MCF 10A (cell line): ENCODE measurements at regions of chr6 and their contacts with region 1.

Region 1: GRCh38 chr6:163533443-163533842 is 118.9 kb downstream of the QKI start:
- DNase-seq: peak; percentile 85
- H3K4me3 Mint-ChIP-seq: no peak overlapping the region
- H3K27ac Mint-ChIP-seq: peak overlapping the region; percentile 19
- H3K4me1 Mint-ChIP-seq: peaks cover 34% of the 10 kb centered on the region
- H3K27me3 Mint-ChIP-seq: no peaks in the 10 kb centered on the region
- CTCF ChIP-seq: no peak

Region 2: DNA sequence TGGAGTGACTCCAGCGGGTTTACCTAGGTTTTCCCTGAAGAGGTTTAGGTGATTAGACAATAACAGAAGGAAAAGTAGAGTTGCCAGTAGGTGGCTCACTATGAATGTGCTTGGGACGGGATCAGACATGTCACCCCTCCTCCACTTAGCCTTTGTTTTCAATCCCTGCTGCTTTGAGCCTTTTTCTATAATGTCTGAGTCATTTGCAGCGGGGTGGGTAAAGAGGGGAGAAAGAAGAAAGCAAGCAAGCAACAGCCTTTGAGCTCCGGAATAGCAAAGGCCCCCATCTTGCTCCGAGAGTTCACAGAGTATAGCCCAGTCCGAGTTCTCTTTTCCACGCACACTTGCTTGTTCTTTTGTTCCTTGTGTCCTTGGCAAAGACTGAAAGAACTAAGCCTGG is 676.6 kb before region 1 on chr6:
- CTCF ChIA-PET with region 1: no interaction called
- POLR2A ChIA-PET with region 1: no interaction called
- intact Hi-C with region 1: loop called (anchors 10 kb)
- DNase-seq: peak; percentile 86
- H3K4me3 Mint-ChIP-seq: peak overlapping the region; percentile 66
- H3K27ac Mint-ChIP-seq: peak overlapping the region; percentile 81
- H3K4me1 Mint-ChIP-seq: peaks cover 9% of the 10 kb centered on the region
- H3K27me3 Mint-ChIP-seq: no peaks in the 10 kb centered on the region
- CTCF ChIP-seq: peak; percentile 59

Region 3: GRCh38 chr6:163457637-163458561 is 75.5 kb before region 1 on chr6:
- CTCF ChIA-PET with region 1: no interaction called
- POLR2A ChIA-PET with region 1: interaction called, 3 read pairs
- intact Hi-C with region 1: loop called (anchors 5 kb)
- DNase-seq: peak; percentile 77
- H3K4me3 Mint-ChIP-seq: peak overlapping the region; percentile 8
- H3K27ac Mint-ChIP-seq: peak overlapping the region; percentile 73
- H3K4me1 Mint-ChIP-seq: peaks cover 58% of the 10 kb centered on the region
- H3K27me3 Mint-ChIP-seq: no peaks in the 10 kb centered on the region
- CTCF ChIP-seq: no peak

Region 4: GRCh38 chr6:163516908-163517307 is 16.5 kb before region 1 on chr6:
- CTCF ChIA-PET with region 1: interaction called, 3 read pairs
- POLR2A ChIA-PET with region 1: interaction called, 10 read pairs
- intact Hi-C with region 1: no loop called
- DNase-seq: no peak
- H3K4me3 Mint-ChIP-seq: no peak overlapping the region
- H3K27ac Mint-ChIP-seq: no peak overlapping the region
- H3K4me1 Mint-ChIP-seq: peaks cover 16% of the 10 kb centered on the region
- H3K27me3 Mint-ChIP-seq: no peaks in the 10 kb centered on the region
- CTCF ChIP-seq: no peak